Activated naive CD8-positive, alpha-beta T cell treated with anti-CD3 and anti-CD28 coated beads, Interleukin-2, amount 10 ng/mL, durations not matched to agents 7 days and 5 days (primary cell): ENCODE measurements at regions of chr4 and their contacts with region 1.

Region 1: GRCh38 chr4:83284193-83285054 is at the start of gene COQ2:
- DNase-seq: peak; percentile 96
- ATAC-seq: peak; percentile 95
- H3K4me3 Mint-ChIP-seq: peak within 1 kb of the TSS; percentile 98
- H3K27ac Mint-ChIP-seq: peak within 1 kb of the TSS; percentile 98
- H3K4me1 Mint-ChIP-seq: peaks cover 40% of the 10 kb centered on the region
- H3K27me3 Mint-ChIP-seq: no peaks in the 10 kb centered on the region
- total RNA-seq, gene COQ2: 13.1 to 15.5 TPM

Region 2: DNA sequence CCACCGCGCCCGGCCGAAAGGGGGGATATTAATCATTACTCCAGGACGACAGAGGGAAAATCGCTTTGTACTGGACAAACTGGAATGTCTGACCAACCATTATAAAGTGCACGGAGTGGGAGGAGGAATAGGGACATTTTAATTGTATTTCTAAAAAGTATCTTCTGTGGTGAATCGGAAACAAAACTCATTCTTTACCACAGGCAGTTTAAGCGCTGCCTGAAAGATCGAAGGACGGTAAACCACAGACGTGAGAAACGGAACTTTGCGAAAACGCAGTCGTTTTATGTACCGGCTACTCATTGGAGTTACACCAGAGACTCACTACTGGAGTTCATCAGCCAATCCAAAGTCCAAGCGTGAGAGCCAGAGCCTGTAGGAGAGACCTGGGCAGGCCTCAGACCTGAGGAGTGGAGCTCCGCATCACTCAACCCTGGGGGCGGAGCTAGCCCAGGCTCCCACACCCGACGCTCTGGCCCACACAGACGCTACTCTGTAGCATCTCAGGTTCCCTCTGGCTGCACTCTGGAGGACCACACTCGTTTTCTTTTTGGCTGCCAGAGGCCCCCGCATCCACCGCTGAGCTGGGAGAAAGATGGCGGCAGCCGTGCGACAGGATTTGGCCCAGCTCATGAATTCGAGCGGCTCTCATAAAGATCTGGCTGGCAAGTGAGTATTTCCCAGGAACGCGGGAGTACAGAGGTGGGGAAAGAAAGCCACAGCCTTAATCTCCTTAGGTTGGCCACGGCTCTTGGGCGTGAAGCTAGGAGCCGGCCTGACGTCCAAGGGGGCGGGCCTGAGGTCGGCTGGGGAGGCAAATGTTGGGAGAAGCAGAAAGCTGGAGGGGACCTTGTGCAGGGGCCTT is 249.6 kb before region 1 on chr4 and contains the start of gene COPS4:
- POLR2A ChIA-PET with region 1: interaction called, 13 read pairs
- DNase-seq: peak; percentile 89
- ATAC-seq: peak; percentile 97
- H3K4me3 Mint-ChIP-seq: peak within 1 kb of the TSS; percentile 100
- H3K27ac Mint-ChIP-seq: peak within 1 kb of the TSS; percentile 99
- H3K4me1 Mint-ChIP-seq: peaks cover 18% of the 10 kb centered on the region
- H3K27me3 Mint-ChIP-seq: no peaks in the 10 kb centered on the region
- total RNA-seq, gene COPS4: 29.3 to 30.3 TPM

Region 3: DNA sequence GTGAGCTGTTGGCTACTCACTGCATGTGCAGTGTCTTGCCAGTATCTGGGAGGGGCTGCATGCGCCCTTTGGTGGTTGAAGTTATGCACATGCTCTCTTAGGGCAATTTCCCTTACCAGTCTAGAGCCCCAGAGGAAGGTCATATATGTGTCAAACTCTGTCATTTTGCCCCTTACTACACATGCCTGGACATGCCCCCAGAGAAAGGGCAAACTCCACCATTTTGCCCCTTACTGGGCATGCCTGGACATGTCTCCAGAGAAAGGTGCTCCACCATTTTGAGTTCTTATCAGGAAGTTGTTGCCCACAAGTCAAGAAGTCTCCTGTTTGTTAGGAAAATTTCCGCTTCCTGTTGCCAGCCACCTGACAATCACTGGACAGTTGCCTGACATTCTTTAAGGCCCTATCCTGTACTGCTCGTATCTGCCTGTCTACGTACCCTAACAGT is 113.4 kb before region 1 on chr4:
- POLR2A ChIA-PET with region 1: no interaction called
- DNase-seq: no peak
- ATAC-seq: peak; percentile 50
- H3K4me3 Mint-ChIP-seq: no peak overlapping the region
- H3K27ac Mint-ChIP-seq: peak overlapping the region; percentile 62
- H3K4me1 Mint-ChIP-seq: peaks cover 12% of the 10 kb centered on the region
- H3K27me3 Mint-ChIP-seq: no peaks in the 10 kb centered on the region

Region 4: GRCh38 chr4:83217721-83218522 is 66.5 kb before region 1 on chr4:
- POLR2A ChIA-PET with region 1: interaction called, 11 read pairs
- DNase-seq: no peak
- ATAC-seq: peak; percentile 90
- H3K4me3 Mint-ChIP-seq: peak overlapping the region; percentile 79
- H3K27ac Mint-ChIP-seq: peak overlapping the region; percentile 89
- H3K4me1 Mint-ChIP-seq: peaks cover 76% of the 10 kb centered on the region
- H3K27me3 Mint-ChIP-seq: no peaks in the 10 kb centered on the region

Region 5: DNA sequence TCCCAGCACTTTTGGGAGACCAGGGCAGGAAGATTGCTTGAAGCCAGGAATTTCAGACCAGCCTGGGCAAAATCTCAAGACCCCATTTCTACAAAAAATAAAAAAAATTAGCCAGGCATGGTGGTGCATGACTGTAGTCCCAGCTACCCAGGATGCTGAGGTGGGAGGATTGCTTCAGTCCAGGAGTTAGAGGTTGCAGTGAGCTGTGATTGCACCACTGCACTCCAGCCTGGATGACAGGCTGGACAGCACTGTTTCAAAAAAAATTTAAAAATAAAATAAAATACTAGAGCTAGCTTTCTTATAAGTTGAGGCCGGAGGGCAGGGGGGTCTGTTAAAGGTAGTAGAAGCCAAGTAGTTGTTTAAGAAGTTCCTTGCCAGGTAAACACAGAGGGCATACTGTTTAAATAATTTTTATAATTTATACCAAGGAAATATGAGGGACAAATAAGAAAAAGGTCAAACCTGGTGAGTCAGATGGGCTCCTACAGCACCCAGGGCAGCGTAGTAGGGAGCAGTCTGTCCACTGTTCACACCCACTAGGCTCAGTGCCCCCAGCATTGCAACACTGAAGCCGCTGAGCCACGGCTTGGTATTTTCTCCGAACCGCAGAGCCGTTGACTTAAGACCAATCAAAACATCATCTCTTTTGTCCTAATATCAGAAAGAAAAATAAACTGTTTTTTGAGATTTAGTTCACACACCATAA is 17.1 kb before region 1 on chr4:
- POLR2A ChIA-PET with region 1: interaction called, 12 read pairs
- DNase-seq: no peak
- ATAC-seq: no peak
- H3K4me3 Mint-ChIP-seq: no peak overlapping the region
- H3K27ac Mint-ChIP-seq: no peak overlapping the region
- H3K4me1 Mint-ChIP-seq: peaks cover 11% of the 10 kb centered on the region
- H3K27me3 Mint-ChIP-seq: no peaks in the 10 kb centered on the region

Region 6: DNA sequence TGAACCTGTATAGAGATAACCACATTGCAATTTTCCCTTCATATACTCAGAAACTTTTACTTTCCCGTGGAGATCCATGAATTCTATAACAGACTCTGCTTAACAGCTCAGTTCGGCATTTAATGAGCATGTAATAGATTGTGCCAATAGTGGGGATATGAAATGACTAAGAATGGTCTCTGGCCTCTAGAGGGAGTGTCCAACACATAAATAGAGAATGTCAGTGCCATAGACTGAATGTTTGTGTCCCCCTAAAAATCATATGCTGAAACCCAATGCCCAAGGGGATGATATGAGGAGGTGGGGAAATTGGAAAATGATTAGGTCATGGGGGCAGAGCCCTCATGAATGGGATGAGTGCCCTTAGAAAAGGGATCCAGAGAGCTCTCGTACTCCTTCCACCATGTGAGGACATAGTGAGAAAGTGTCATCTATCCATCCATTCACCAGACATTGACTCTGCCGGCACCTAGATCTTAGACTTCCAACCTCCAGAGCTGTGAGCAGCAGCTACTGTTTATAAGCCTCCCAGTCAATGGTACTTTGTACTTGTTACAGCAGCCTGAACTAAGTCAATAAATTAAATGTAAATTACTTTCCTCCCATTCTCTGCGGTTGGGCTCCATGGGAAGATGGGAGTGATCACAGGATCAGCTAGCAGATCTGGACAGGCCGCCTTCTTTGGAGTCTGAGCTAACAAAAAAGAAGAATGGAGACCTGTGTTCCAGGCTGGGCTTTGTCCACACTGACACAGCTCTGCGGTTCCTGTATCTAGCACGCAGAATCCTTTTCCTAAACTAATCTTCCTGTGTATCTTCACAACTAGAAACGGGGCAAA is 78.3 kb after region 1 on chr4:
- POLR2A ChIA-PET with region 1: no interaction called
- DNase-seq: no peak
- ATAC-seq: peak; percentile 65
- H3K4me3 Mint-ChIP-seq: no peak overlapping the region
- H3K27ac Mint-ChIP-seq: no peak overlapping the region
- H3K4me1 Mint-ChIP-seq: peaks cover 5% of the 10 kb centered on the region
- H3K27me3 Mint-ChIP-seq: peaks cover 2% of the 10 kb centered on the region

Region 7: GRCh38 chr4:83387753-83388676 is 103.6 kb after region 1 on chr4:
- POLR2A ChIA-PET with region 1: interaction called, 13 read pairs
- DNase-seq: no peak
- ATAC-seq: peak; percentile 98
- H3K4me3 Mint-ChIP-seq: peak overlapping the region; percentile 31
- H3K27ac Mint-ChIP-seq: peak overlapping the region; percentile 75
- H3K4me1 Mint-ChIP-seq: peaks cover 9% of the 10 kb centered on the region
- H3K27me3 Mint-ChIP-seq: peaks cover 6% of the 10 kb centered on the region

Region 8: DNA sequence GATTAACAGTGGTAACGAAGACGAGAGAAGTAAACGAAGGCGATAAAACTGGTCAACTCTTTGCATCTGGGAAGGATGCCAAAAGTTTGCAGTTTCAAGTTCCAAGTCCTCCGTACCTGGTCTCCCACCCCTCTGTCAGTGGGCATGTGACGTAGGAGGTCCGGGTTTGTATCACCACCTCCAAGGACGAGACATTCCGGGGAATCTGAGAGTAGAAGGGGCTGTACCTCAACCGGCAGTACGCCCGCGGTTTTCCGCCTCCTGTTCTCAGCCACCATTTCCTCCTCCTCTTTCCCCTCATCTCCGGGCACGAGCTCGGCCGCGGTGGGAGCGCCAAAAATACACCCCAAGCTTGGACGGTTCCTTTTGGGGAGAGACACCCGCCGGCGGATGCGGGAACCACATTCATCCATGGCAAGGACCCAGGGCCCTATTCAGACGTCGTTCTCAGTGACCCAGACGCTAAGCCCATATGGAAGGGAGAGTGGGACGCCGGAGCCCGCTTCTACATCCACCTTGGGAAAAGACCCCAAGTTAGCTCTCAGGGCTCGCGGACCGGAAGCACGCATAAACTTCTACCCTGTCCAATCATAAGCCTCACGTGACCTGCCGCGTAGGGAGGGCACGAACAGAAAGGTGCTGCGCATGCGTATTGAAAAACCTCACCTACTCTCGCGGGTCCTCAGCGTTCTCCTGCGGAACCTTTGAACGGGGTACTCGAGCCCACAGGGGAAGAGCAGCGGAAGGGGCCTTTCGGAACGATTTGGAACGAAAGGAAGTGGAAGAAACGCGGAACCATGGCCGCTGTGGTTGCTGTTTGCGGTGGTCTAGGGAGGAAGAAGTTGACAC is 171.1 kb after region 1 on chr4 and contains the starts of genes HELQ and MRPS18C:
- POLR2A ChIA-PET with region 1: interaction called, 11 read pairs
- DNase-seq: peak; percentile 89
- ATAC-seq: peak; percentile 92
- H3K4me3 Mint-ChIP-seq: peak within 1 kb of the TSS; percentile 100
- H3K27ac Mint-ChIP-seq: peak within 1 kb of the TSS; percentile 100
- H3K4me1 Mint-ChIP-seq: peaks cover 37% of the 10 kb centered on the region
- H3K27me3 Mint-ChIP-seq: no peaks in the 10 kb centered on the region
- total RNA-seq, gene HELQ: 27.4 to 28.7 TPM
- total RNA-seq, gene MRPS18C: 53.6 to 60.4 TPM

Region 9: DNA sequence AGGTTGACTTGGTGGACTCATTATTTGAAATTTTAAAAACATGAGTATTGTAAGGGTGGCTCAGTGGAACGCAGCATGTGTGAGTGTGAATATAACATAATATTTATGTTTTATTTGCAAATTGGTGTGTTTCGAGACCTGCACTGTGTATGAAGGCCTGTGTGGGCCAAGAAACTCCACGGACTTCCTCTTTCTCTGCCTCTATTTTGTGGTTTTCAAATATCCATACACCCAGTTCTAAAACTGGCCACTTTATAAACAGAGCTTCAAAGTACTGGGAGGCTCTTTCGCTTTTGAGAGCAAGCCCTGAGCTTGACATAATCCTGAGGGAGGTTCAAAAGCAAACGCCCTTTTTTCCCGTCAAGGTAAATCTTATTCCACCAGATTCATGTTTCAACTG is 439.2 kb after region 1 on chr4:
- POLR2A ChIA-PET with region 1: no interaction called
- DNase-seq: no peak
- ATAC-seq: no peak
- H3K4me3 Mint-ChIP-seq: no peak overlapping the region
- H3K27ac Mint-ChIP-seq: no peak overlapping the region
- H3K4me1 Mint-ChIP-seq: no peaks in the 10 kb centered on the region
- H3K27me3 Mint-ChIP-seq: no peaks in the 10 kb centered on the region